Panc1 (cell line): ENCODE measurements at regions of chr9 and their contacts with region 1.

Region 1: DNA sequence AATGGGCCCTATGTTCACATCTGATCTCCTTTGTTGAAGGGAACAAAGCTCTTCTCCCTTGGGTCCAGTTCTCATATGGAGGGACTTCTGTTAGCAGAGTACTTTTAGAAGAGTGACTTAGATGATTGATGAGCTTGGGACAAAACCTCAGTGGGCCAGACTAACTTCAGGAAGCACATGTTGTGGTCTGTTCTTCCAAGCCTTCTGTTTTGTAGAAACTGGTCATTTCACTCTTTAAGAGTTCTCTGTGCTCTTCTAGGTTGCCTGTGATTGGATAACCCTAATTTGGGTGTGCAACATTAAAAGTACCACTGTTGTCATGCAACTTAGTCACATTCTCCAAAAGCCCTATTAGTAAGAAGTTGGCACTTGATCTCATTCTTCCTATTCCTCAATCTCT is 183.5 kb upstream of the ACO1 start:
- DNase-seq: no peak
- ATAC-seq: no peak
- H3K4me3 ChIP-seq: no peak overlapping the region
- H3K27ac ChIP-seq: no peak overlapping the region
- H3K4me1 ChIP-seq: no peaks in the 10 kb centered on the region
- H3K27me3 ChIP-seq: no peaks in the 10 kb centered on the region
- CTCF ChIP-seq: no peak

Region 2: GRCh38 chr9:32360983-32361673 is 160.2 kb after region 1 on chr9:
- CTCF ChIA-PET with region 1: interaction called, 12 read pairs
- POLR2A ChIA-PET with region 1: no interaction called
- in situ Hi-C with region 1: no loop called
- intact Hi-C with region 1: no loop called
- DNase-seq: no peak
- ATAC-seq: no peak
- H3K4me3 ChIP-seq: no peak overlapping the region
- H3K27ac ChIP-seq: no peak overlapping the region
- H3K4me1 ChIP-seq: no peaks in the 10 kb centered on the region
- H3K27me3 ChIP-seq: no peaks in the 10 kb centered on the region
- CTCF ChIP-seq: no peak